Endothelial cell of umbilical vein (primary cell): ENCODE measurements at regions of chrX and their contacts with region 1.

Region 1: DNA sequence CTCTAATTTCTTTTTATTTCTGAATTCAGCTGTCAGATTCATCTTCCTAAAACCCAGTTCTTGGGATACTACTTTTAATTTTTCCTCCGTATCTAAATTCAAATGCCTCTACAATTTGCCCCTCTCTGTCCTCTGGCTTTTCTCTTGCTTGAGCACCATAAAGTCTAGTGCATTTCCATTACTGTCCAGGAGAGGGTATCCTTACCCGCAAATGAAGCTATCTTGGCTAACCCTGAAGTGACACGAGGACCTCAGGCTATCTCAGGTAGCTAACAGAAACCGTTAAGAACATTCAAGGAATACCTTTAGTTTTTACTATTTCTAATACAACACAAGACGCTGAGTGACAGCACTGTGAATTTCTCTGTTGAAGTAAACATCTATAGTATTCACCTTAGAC is 49.3 kb upstream of the PRR32 start:
- DNase-seq: peak; percentile 15
- H3K4me3 ChIP-seq: no peak overlapping the region
- H3K27ac ChIP-seq: no peak overlapping the region
- H3K4me1 ChIP-seq: no peaks in the 10 kb centered on the region
- H3K27me3 ChIP-seq: no peaks in the 10 kb centered on the region
- CTCF ChIP-seq: peak in 1 of 2 donors; percentile 28
- POLR2A ChIP-seq: no peak

Region 2: DNA sequence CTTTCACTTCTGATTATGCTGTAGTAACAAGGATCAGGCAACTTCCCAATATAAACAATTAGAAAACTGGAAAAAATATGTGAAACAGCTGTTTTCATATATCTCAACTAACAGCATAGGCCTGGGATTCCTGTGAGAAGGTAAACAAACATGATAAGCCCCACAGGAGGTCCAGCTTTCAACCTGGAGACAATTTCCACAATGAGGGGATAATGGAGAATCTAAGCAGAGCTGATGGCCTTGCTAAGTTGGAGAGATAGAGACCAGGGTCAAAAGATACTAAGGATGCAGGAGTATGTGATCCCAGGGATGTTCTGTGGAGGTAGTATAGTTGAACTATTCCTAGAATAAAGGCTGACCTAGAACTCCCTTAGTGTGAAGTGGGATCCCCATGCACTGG is 1734.3 kb after region 1 on chrX:
- CTCF ChIA-PET with region 1: no interaction called
- POLR2A ChIA-PET with region 1: no interaction called
- dilution Hi-C with region 1: no loop called
- intact Hi-C with region 1: no loop called
- DNase-seq: no peak
- H3K4me3 ChIP-seq: no peak overlapping the region
- H3K27ac ChIP-seq: no peak overlapping the region
- H3K4me1 ChIP-seq: no peaks in the 10 kb centered on the region
- H3K27me3 ChIP-seq: no peaks in the 10 kb centered on the region
- CTCF ChIP-seq: no peak
- POLR2A ChIP-seq: no peak

Region 3: DNA sequence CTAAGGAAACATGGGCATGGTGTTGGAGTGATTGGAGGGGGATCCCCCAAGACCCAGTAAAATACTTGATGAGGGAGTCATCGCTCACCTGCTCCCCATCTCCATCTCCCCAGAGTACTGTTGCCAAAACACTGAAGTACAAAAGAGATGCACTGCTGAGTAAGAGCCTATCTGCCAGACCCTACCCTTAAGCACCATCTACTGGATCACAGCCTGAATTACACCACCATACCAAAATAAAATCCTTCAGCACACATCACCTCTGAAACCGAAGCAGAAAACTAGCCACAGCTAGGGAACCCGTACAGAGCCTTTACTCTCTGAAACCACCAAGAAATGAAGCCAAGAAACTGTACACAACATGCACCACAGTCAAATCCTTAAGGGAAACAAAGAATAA is 1748.3 kb after region 1 on chrX:
- CTCF ChIA-PET with region 1: interaction called, 19 read pairs
- POLR2A ChIA-PET with region 1: no interaction called
- dilution Hi-C with region 1: no loop called
- intact Hi-C with region 1: no loop called
- DNase-seq: peak; percentile 33
- H3K4me3 ChIP-seq: no peak overlapping the region
- H3K27ac ChIP-seq: no peak overlapping the region
- H3K4me1 ChIP-seq: no peaks in the 10 kb centered on the region
- H3K27me3 ChIP-seq: no peaks in the 10 kb centered on the region
- CTCF ChIP-seq: peak; percentile 28 to 36
- POLR2A ChIP-seq: no peak